IMR-90 (cell line): ENCODE measurements at regions of chr15 and their contacts with region 1.

Region 1: GRCh38 chr15:42632105-42632675 is 56.8 kb downstream of the STARD9 start:
- DNase-seq: no peak
- ATAC-seq: no peak
- H3K4me3 ChIP-seq: no peak overlapping the region
- H3K27ac ChIP-seq: no peak overlapping the region
- H3K4me1 ChIP-seq: no peaks in the 10 kb centered on the region
- H3K27me3 ChIP-seq: no peaks in the 10 kb centered on the region
- CTCF ChIP-seq: no peak
- POLR2A ChIP-seq: no peak
- RAD21 ChIP-seq: no peak

Region 2: DNA sequence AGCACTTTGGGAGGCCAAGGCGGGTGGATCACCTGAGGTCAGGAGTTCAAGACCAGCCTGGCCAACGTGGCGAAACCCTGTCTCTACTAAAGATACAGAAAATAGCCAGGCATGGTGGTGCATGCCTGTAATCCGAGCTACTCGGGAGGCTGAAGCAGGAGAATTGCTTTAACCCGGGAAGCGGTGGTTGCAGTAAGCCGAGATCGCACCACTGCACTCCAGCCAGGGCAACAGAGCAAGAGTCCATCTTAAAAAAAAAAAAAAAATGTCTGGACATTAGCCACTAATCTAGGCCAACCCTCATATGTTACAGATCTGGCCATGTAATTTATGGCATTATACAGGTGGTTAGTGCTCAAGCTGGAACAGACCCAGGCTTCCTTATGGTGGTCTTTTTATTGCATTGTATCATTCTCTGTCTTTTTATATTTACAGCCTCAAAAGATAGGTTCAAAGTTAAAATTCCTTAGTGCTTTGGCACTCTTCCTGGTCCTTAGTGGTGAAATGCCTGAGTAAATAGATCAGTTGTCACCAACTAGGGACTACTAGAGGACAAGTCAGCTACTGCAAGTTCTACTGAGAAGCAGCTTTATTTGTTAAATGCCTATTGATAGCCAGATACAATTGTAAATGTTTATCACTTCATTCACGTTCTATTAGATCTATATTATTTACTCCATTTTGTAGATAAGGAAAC is 40.8 kb before region 1 on chr15:
- CTCF ChIA-PET with region 1: interaction called, 3 read pairs
- POLR2A ChIA-PET with region 1: no interaction called
- dilution Hi-C with region 1: no loop called
- in situ Hi-C with region 1: no loop called
- intact Hi-C with region 1: loop called (anchors 5 kb)
- DNase-seq: peak; percentile 54
- ATAC-seq: peak; percentile 71
- H3K4me3 ChIP-seq: no peak overlapping the region
- H3K27ac ChIP-seq: no peak overlapping the region
- H3K4me1 ChIP-seq: peaks cover 8% of the 10 kb centered on the region
- H3K27me3 ChIP-seq: no peaks in the 10 kb centered on the region
- CTCF ChIP-seq: peak; percentile 41
- POLR2A ChIP-seq: no peak
- RAD21 ChIP-seq: no peak